B cell (primary cell): ENCODE measurements at regions of chr22 and their contacts with region 1.

Region 1: GRCh38 chr22:40645579-40646197 is 9.2 kb upstream of the MRTFA start:
- DNase-seq: no peak
- ATAC-seq: no peak
- H3K4me3 ChIP-seq: peak overlapping the region in 1 of 5 experiments; percentile 7
- H3K4me3 Mint-ChIP-seq: peak overlapping the region; percentile 59
- H3K27ac ChIP-seq: no peak overlapping the region
- H3K27ac Mint-ChIP-seq: no peak overlapping the region
- H3K4me1 ChIP-seq: peaks cover 4 to 17% of the 10 kb centered on the region in 2 donors
- H3K4me1 Mint-ChIP-seq: peaks cover 11% of the 10 kb centered on the region
- H3K27me3 ChIP-seq: no peaks in the 10 kb centered on the region
- H3K27me3 Mint-ChIP-seq: no peaks in the 10 kb centered on the region
- CTCF ChIP-seq: no peak

Region 2: GRCh38 chr22:40376149-40376548 is 269.5 kb before region 1 on chr22:
- CTCF ChIA-PET with region 1: no interaction called
- POLR2A ChIA-PET with region 1: no interaction called
- intact Hi-C with region 1: loop called (anchors 5 kb)
- DNase-seq: peak; percentile 58
- ATAC-seq: peak; percentile 71
- H3K4me3 ChIP-seq: peak overlapping the region in 1 of 5 experiments; percentile 1
- H3K4me3 Mint-ChIP-seq: peak overlapping the region; percentile 69
- H3K27ac ChIP-seq: peak overlapping the region in 1 of 2 donors; percentile 71
- H3K27ac Mint-ChIP-seq: peak overlapping the region; percentile 89
- H3K4me1 ChIP-seq: peaks cover 48 to 51% of the 10 kb centered on the region in 2 donors
- H3K4me1 Mint-ChIP-seq: peaks cover 68% of the 10 kb centered on the region
- H3K27me3 ChIP-seq: no peaks in the 10 kb centered on the region
- H3K27me3 Mint-ChIP-seq: no peaks in the 10 kb centered on the region
- CTCF ChIP-seq: no peak

Region 3: GRCh38 chr22:40418366-40419201 is 227.1 kb before region 1 on chr22:
- CTCF ChIA-PET with region 1: interaction called, 10 read pairs
- POLR2A ChIA-PET with region 1: no interaction called
- intact Hi-C with region 1: no loop called
- DNase-seq: peak; percentile 62
- ATAC-seq: peak; percentile 20
- H3K4me3 ChIP-seq: no peak overlapping the region
- H3K4me3 Mint-ChIP-seq: no peak overlapping the region
- H3K27ac ChIP-seq: peak overlapping the region; percentile 16 to 17
- H3K27ac Mint-ChIP-seq: peak overlapping the region; percentile 64
- H3K4me1 ChIP-seq: peaks cover 54 to 64% of the 10 kb centered on the region in 2 donors
- H3K4me1 Mint-ChIP-seq: peaks cover 60% of the 10 kb centered on the region
- H3K27me3 ChIP-seq: no peaks in the 10 kb centered on the region
- H3K27me3 Mint-ChIP-seq: no peaks in the 10 kb centered on the region
- CTCF ChIP-seq: no peak

Region 4: DNA sequence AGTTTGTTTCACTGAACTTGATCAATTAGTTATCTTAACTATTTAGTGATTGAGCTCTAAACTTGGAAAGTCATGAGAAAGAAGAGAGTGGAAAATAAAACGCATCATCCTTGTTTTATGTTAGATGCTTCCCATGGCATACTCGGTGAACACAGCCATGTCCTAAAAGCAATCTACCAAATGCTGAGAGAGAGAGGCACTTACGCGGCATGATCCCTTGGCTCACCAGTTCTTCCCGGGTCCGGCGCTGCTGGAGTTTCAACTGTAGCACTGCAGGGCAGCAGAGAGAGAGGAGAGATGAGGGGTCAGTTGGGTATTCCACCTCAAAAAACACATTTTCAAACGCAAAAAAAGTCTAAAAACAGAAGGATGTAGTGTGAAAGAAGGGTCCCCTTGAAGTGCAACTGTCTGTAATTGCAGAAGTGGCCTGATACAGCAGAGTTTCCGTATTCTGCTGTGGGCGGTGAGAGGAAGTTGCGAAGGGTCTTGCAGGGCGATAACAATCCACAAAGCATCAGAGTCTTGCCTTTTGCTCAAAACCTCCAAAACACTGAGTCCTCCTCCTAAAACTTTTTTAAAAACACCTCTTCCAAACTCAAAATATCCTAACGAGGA is 182.6 kb before region 1 on chr22:
- CTCF ChIA-PET with region 1: interaction called, 10 read pairs
- POLR2A ChIA-PET with region 1: no interaction called
- intact Hi-C with region 1: no loop called
- DNase-seq: peak; percentile 77
- ATAC-seq: peak; percentile 88
- H3K4me3 ChIP-seq: peak overlapping the region; percentile 73 to 99 (median 80)
- H3K4me3 Mint-ChIP-seq: peak overlapping the region; percentile 97
- H3K27ac ChIP-seq: peak overlapping the region; percentile 81 to 89
- H3K27ac Mint-ChIP-seq: peak overlapping the region; percentile 98
- H3K4me1 ChIP-seq: peaks cover 36 to 43% of the 10 kb centered on the region in 2 donors
- H3K4me1 Mint-ChIP-seq: peaks cover 55% of the 10 kb centered on the region
- H3K27me3 ChIP-seq: no peaks in the 10 kb centered on the region
- H3K27me3 Mint-ChIP-seq: no peaks in the 10 kb centered on the region
- CTCF ChIP-seq: no peak

Region 5: DNA sequence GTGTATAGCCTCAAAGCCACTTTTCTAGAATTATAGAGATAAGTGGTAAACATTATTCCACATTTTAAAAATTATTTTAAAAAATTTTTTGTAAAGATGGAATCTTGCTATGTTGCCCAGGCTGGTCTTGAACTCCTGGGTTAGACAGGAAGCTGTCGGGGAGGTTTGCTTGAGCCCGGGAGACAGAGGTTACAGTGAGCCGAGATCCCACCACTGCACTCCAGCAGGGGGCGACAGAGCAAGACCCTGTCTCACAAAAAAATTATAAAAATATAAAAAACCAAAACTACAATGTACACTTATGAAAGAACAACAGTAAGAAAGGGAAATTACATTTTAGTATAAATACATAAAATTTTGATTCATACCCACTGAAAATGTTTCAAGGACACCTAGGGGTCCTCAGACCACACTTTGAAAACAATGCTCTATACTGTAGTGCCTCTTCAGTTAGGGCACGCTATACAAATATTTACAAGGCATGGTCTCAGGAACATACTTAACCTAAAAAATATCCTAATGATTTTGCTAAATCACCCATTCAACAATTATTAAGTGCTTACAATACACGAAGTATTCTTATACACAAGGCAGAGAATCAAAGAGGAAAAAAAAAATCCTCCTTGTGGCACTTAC is 120.3 kb before region 1 on chr22:
- CTCF ChIA-PET with region 1: interaction called, 113 read pairs
- POLR2A ChIA-PET with region 1: no interaction called
- intact Hi-C with region 1: loop called (anchors 1 kb)
- DNase-seq: peak; percentile 68
- ATAC-seq: peak; percentile 63
- H3K4me3 ChIP-seq: no peak overlapping the region
- H3K4me3 Mint-ChIP-seq: no peak overlapping the region
- H3K27ac ChIP-seq: no peak overlapping the region
- H3K27ac Mint-ChIP-seq: no peak overlapping the region
- H3K4me1 ChIP-seq: peaks cover 7% of the 10 kb centered on the region in 2 donors
- H3K4me1 Mint-ChIP-seq: peaks cover 19% of the 10 kb centered on the region
- H3K27me3 ChIP-seq: no peaks in the 10 kb centered on the region
- H3K27me3 Mint-ChIP-seq: no peaks in the 10 kb centered on the region
- CTCF ChIP-seq: peak; percentile 89

Region 6: GRCh38 chr22:40533712-40534378 is 111.8 kb before region 1 on chr22:
- CTCF ChIA-PET with region 1: interaction called, 25 read pairs
- POLR2A ChIA-PET with region 1: no interaction called
- intact Hi-C with region 1: loop called (anchors 2 kb)
- DNase-seq: peak; percentile 66
- ATAC-seq: peak; percentile 86
- H3K4me3 ChIP-seq: peak overlapping the region in 3 of 5 experiments; percentile 20 to 25 (median 21)
- H3K4me3 Mint-ChIP-seq: peak overlapping the region; percentile 53
- H3K27ac ChIP-seq: peak overlapping the region in 1 of 2 donors; percentile 72
- H3K27ac Mint-ChIP-seq: peak overlapping the region; percentile 43
- H3K4me1 ChIP-seq: peaks cover 31 to 46% of the 10 kb centered on the region in 2 donors
- H3K4me1 Mint-ChIP-seq: peaks cover 53% of the 10 kb centered on the region
- H3K27me3 ChIP-seq: no peaks in the 10 kb centered on the region
- H3K27me3 Mint-ChIP-seq: no peaks in the 10 kb centered on the region
- CTCF ChIP-seq: no peak

Region 7: GRCh38 chr22:40673017-40673416 is 27.3 kb after region 1 on chr22:
- CTCF ChIA-PET with region 1: no interaction called
- POLR2A ChIA-PET with region 1: no interaction called
- intact Hi-C with region 1: no loop called
- DNase-seq: no peak
- ATAC-seq: no peak
- H3K4me3 ChIP-seq: no peak overlapping the region
- H3K4me3 Mint-ChIP-seq: no peak overlapping the region
- H3K27ac ChIP-seq: no peak overlapping the region
- H3K27ac Mint-ChIP-seq: no peak overlapping the region
- H3K4me1 ChIP-seq: no peaks in the 10 kb centered on the region
- H3K4me1 Mint-ChIP-seq: no peaks in the 10 kb centered on the region
- H3K27me3 ChIP-seq: no peaks in the 10 kb centered on the region
- H3K27me3 Mint-ChIP-seq: no peaks in the 10 kb centered on the region
- CTCF ChIP-seq: no peak

Region 8: GRCh38 chr22:40898850-40899357 is 253.2 kb after region 1 on chr22:
- CTCF ChIA-PET with region 1: interaction called, 15 read pairs
- POLR2A ChIA-PET with region 1: no interaction called
- intact Hi-C with region 1: no loop called
- DNase-seq: peak; percentile 65
- ATAC-seq: peak; percentile 57
- H3K4me3 ChIP-seq: no peak overlapping the region
- H3K4me3 Mint-ChIP-seq: no peak overlapping the region
- H3K27ac ChIP-seq: no peak overlapping the region
- H3K27ac Mint-ChIP-seq: no peak overlapping the region
- H3K4me1 ChIP-seq: no peaks in the 10 kb centered on the region
- H3K4me1 Mint-ChIP-seq: peaks cover 5% of the 10 kb centered on the region
- H3K27me3 ChIP-seq: no peaks in the 10 kb centered on the region
- H3K27me3 Mint-ChIP-seq: no peaks in the 10 kb centered on the region
- CTCF ChIP-seq: peak; percentile 63